B cell (primary cell): ENCODE measurements at regions of chr5 and their contacts with region 1.

Region 1: DNA sequence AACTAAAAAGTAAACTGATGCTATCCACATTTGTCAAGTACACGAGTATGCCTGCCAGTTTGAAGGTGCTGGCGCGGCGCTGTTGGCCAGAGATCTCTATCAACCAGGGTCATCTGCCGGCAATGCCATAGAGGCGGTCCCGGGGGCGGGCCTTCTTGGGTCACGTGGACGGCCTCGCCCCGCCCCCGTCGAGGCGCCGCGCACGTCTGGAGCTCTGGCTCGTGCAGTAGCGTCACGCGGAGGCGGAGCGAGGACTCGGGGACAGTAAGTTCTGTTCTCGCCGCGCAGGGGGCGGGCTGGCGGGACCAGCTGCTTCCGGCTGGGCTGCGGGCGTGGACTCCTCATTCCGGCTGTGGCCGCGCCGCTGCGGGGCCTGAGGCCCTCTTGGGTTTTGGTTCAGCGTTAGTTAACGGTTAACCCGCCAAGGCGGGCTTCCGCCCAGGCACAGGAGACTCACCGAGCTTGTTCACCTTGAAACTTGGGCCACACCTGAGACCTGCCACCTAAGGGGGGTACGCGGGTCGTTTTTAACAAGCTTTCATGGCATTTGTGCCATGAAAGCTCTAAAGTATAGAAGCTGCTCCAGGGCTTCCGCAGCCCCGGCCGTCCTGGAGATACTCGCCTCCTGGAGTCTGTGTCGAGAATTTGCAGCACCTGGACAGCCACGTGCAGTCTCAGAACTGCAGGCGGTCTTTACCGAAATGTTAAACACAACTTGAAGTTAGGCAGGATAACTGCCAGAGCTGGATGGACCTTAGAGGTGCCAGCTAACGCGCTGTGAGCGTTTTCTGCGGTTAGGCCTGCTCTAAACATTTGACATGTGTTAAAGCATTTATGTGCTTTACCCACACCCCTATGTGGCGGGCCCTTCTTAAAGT is at the start of gene RFESD:
- DNase-seq: peak; percentile 95
- ATAC-seq: peak; percentile 97
- H3K4me3 ChIP-seq: peak within 1 kb of the TSS; percentile 56 to 87 (median 80)
- H3K4me3 Mint-ChIP-seq: peak within 1 kb of the TSS; percentile 90
- H3K27ac ChIP-seq: peak within 1 kb of the TSS; percentile 68 to 75
- H3K27ac Mint-ChIP-seq: peak within 1 kb of the TSS; percentile 93
- H3K4me1 ChIP-seq: peaks cover 14 to 20% of the 10 kb centered on the region in 2 donors
- H3K4me1 Mint-ChIP-seq: peaks cover 18% of the 10 kb centered on the region
- H3K27me3 ChIP-seq: no peaks in the 10 kb centered on the region
- H3K27me3 Mint-ChIP-seq: no peaks in the 10 kb centered on the region
- CTCF ChIP-seq: peak; percentile 28
- total RNA-seq, gene RFESD: 1.9 and 3.0 TPM in 2 replicates

Region 2: DNA sequence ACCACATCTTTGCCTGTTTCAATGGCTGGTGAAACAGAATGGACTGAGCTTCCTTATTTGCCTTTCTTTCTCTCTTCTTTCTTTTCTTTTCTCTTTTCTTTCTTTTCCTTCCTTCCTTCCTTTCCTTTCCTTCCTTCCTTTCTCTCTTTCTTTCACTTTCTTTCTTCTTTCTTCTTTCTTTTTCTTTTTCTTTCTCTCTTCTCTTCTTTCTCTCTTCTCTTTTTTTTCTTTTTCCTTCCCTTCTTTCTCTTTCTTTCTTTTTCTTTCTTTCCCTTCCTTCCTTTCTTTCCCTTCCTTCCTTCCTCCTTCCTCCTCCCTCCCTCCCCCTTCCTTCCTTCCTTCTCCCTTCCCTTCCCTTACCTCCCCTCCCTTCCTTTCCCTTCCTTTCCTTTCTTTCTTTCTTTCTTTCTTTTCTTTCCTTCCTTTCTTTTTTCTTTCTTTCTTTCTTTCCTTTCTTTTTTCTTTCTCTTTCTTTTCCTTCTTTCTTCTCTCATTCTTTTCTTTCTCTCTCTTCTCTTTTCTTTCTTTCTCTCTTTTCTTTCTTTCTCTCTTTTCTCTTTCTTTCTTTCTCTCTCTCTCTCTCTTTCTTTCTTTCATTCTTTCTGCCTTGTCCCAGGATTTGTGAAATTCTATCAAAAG is 311.8 kb before region 1 on chr5:
- CTCF ChIA-PET with region 1: no interaction called
- POLR2A ChIA-PET with region 1: no interaction called
- intact Hi-C with region 1: no loop called
- DNase-seq: no peak
- ATAC-seq: no peak
- H3K4me3 ChIP-seq: no peak overlapping the region
- H3K4me3 Mint-ChIP-seq: no peak overlapping the region
- H3K27ac ChIP-seq: no peak overlapping the region
- H3K27ac Mint-ChIP-seq: no peak overlapping the region
- H3K4me1 ChIP-seq: no peaks in the 10 kb centered on the region
- H3K4me1 Mint-ChIP-seq: no peaks in the 10 kb centered on the region
- H3K27me3 ChIP-seq: no peaks in the 10 kb centered on the region
- H3K27me3 Mint-ChIP-seq: peaks cover 3% of the 10 kb centered on the region
- CTCF ChIP-seq: peak; percentile 31

Region 3: GRCh38 chr5:95631991-95632675 is 14.7 kb before region 1 on chr5:
- CTCF ChIA-PET with region 1: interaction called, 17 read pairs
- POLR2A ChIA-PET with region 1: interaction called, 4 read pairs
- intact Hi-C with region 1: no loop called
- DNase-seq: peak; percentile 68
- ATAC-seq: peak; percentile 95
- H3K4me3 ChIP-seq: no peak overlapping the region
- H3K4me3 Mint-ChIP-seq: no peak overlapping the region
- H3K27ac ChIP-seq: peak overlapping the region in 1 of 2 donors; percentile 10
- H3K27ac Mint-ChIP-seq: peak overlapping the region; percentile 83
- H3K4me1 ChIP-seq: peaks cover 7 to 9% of the 10 kb centered on the region in 2 donors
- H3K4me1 Mint-ChIP-seq: peaks cover 11% of the 10 kb centered on the region
- H3K27me3 ChIP-seq: no peaks in the 10 kb centered on the region
- H3K27me3 Mint-ChIP-seq: peaks cover 4% of the 10 kb centered on the region
- CTCF ChIP-seq: no peak

Region 4: GRCh38 chr5:95808686-95809413 is 162.1 kb after region 1 on chr5:
- CTCF ChIA-PET with region 1: interaction called, 15 read pairs
- POLR2A ChIA-PET with region 1: interaction called, 4 read pairs
- intact Hi-C with region 1: no loop called
- DNase-seq: peak; percentile 95
- ATAC-seq: peak; percentile 100
- H3K4me3 ChIP-seq: peak overlapping the region in 3 of 5 experiments; percentile 27 to 39 (median 33)
- H3K4me3 Mint-ChIP-seq: peak overlapping the region; percentile 86
- H3K27ac ChIP-seq: peak overlapping the region; percentile 81 to 97
- H3K27ac Mint-ChIP-seq: peak overlapping the region; percentile 97
- H3K4me1 ChIP-seq: peaks cover 34 to 37% of the 10 kb centered on the region in 2 donors
- H3K4me1 Mint-ChIP-seq: peaks cover 58% of the 10 kb centered on the region
- H3K27me3 ChIP-seq: no peaks in the 10 kb centered on the region
- H3K27me3 Mint-ChIP-seq: no peaks in the 10 kb centered on the region
- CTCF ChIP-seq: no peak

Region 5: GRCh38 chr5:95961617-95962474 is 315.1 kb after region 1 on chr5 and contains the start of gene ELL2:
- CTCF ChIA-PET with region 1: no interaction called
- POLR2A ChIA-PET with region 1: no interaction called
- intact Hi-C with region 1: loop called (anchors 1 kb)
- DNase-seq: peak; percentile 99
- ATAC-seq: peak; percentile 81
- H3K4me3 ChIP-seq: peak within 1 kb of the TSS; percentile 91 to 98 (median 92)
- H3K4me3 Mint-ChIP-seq: peak within 1 kb of the TSS; percentile 99
- H3K27ac ChIP-seq: peak within 1 kb of the TSS; percentile 92 to 99
- H3K27ac Mint-ChIP-seq: peak within 1 kb of the TSS; percentile 97
- H3K4me1 ChIP-seq: peaks cover 21 to 36% of the 10 kb centered on the region in 2 donors
- H3K4me1 Mint-ChIP-seq: peaks cover 47% of the 10 kb centered on the region
- H3K27me3 ChIP-seq: no peaks in the 10 kb centered on the region
- H3K27me3 Mint-ChIP-seq: peaks cover 2% of the 10 kb centered on the region
- CTCF ChIP-seq: no peak
- total RNA-seq, gene ELL2: 27.0 and 31.6 TPM in 2 replicates

Region 6: GRCh38 chr5:96662725-96663513 is 1016.1 kb after region 1 on chr5:
- CTCF ChIA-PET with region 1: no interaction called
- POLR2A ChIA-PET with region 1: no interaction called
- intact Hi-C with region 1: loop called (anchors 2 kb)
- DNase-seq: peak; percentile 91
- ATAC-seq: peak; percentile 74
- H3K4me3 ChIP-seq: peak overlapping the region; percentile 60 to 89 (median 83)
- H3K4me3 Mint-ChIP-seq: peak overlapping the region; percentile 100
- H3K27ac ChIP-seq: peak overlapping the region; percentile 85 to 89
- H3K27ac Mint-ChIP-seq: peak overlapping the region; percentile 100
- H3K4me1 ChIP-seq: peaks cover 16 to 21% of the 10 kb centered on the region in 2 donors
- H3K4me1 Mint-ChIP-seq: peaks cover 53% of the 10 kb centered on the region
- H3K27me3 ChIP-seq: no peaks in the 10 kb centered on the region
- H3K27me3 Mint-ChIP-seq: no peaks in the 10 kb centered on the region
- CTCF ChIP-seq: no peak